Breast epithelium (tissue), 4 donors: ENCODE measurements at regions of chr4 and their contacts with region 1.

Region 1: DNA sequence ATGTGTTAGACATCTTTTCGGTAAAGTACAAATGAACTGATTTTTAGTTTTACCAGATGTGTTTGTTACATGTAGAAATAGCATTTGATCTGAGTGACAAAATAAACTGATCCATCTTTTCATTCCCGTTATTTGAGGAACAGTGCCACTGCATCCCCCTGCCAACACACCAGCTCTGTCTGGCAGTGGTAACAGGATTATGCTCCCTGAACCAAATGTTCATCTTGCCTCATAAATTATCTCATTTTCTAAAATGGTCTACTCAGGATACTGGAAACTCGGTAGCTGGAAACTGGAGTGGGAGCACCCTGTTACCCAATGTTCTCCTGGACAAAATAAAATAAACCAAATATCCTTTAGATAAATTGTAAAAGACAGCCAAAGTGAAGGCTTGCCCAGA is 171.6 kb downstream of the FAT4 start:
- DNase-seq: no peak
- H3K4me3 ChIP-seq: no peak overlapping the region
- H3K27ac ChIP-seq: no peak overlapping the region
- H3K4me1 ChIP-seq: no peaks in the 10 kb centered on the region
- H3K27me3 ChIP-seq: no peaks in the 10 kb centered on the region
- CTCF ChIP-seq: no peak
- POLR2A ChIP-seq: no peak

Region 2: GRCh38 chr4:125505621-125506020 is 19.3 kb after region 1 on chr4:
- intact Hi-C with region 1: loop called (anchors 1 kb)
- DNase-seq: no peak
- H3K4me3 ChIP-seq: no peak overlapping the region
- H3K27ac ChIP-seq: no peak overlapping the region
- H3K4me1 ChIP-seq: no peaks in the 10 kb centered on the region
- H3K27me3 ChIP-seq: no peaks in the 10 kb centered on the region
- CTCF ChIP-seq: no peak
- POLR2A ChIP-seq: no peak

Region 3: GRCh38 chr4:125526420-125526819 is 40.1 kb after region 1 on chr4:
- intact Hi-C with region 1: no loop called
- DNase-seq: no peak
- H3K4me3 ChIP-seq: no peak overlapping the region
- H3K27ac ChIP-seq: no peak overlapping the region
- H3K4me1 ChIP-seq: no peaks in the 10 kb centered on the region
- H3K27me3 ChIP-seq: no peaks in the 10 kb centered on the region
- CTCF ChIP-seq: no peak
- POLR2A ChIP-seq: no peak